ENCODE measurements at regions of chr1 and their contacts with region 1.

Region 1: GRCh38 chr1:158124999-158125398 is 55.7 kb upstream of the CD1D start:
- DNase-seq: peak; percentile 91
- ATAC-seq: peak; percentile 89
- H3K4me3 Mint-ChIP-seq: no peak overlapping the region
- H3K27ac Mint-ChIP-seq: no peak overlapping the region
- H3K4me1 Mint-ChIP-seq: peaks cover 39% of the 10 kb centered on the region
- H3K27me3 Mint-ChIP-seq: no peaks in the 10 kb centered on the region; the same call in none of the 2 replicates
- CTCF ChIP-seq: peak; percentile 78

Region 2: DNA sequence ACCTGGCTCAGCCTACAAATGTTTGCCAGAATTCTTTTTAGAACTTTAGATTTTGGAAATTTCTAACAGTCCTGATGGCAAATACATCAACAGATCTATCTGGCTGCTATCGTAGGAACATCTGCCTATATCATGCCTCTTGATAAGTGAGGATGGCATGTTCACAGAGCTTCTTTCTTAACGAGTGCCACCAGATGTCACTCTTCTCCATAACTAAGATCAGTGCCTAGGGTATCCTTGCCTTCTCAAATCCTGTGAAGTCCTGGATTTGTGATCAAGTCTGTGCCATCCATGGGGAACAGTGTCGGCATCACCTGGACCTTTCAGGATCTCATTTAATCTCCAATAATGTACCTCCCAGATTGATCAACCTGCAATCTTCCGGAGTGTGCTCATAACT is 246.9 kb before region 1 on chr1:
- CTCF ChIA-PET with region 1: interaction called, 12 read pairs
- POLR2A ChIA-PET with region 1: no interaction called
- DNase-seq: no peak
- ATAC-seq: peak; percentile 92
- H3K4me3 Mint-ChIP-seq: no peak overlapping the region
- H3K27ac Mint-ChIP-seq: no peak overlapping the region
- H3K4me1 Mint-ChIP-seq: no peaks in the 10 kb centered on the region
- H3K27me3 Mint-ChIP-seq: no peaks in the 10 kb centered on the region; the same call in 1 of the 2 replicates
- CTCF ChIP-seq: peak; percentile 28; the same call in 1 of the 2 replicates

Region 3: GRCh38 chr1:157963713-157964112 is 161.3 kb before region 1 on chr1:
- CTCF ChIA-PET with region 1: interaction called, 820 read pairs
- POLR2A ChIA-PET with region 1: interaction called, 3 read pairs
- DNase-seq: peak; percentile 79
- ATAC-seq: peak; percentile 90
- H3K4me3 Mint-ChIP-seq: no peak overlapping the region
- H3K27ac Mint-ChIP-seq: no peak overlapping the region
- H3K4me1 Mint-ChIP-seq: peaks cover 14% of the 10 kb centered on the region
- H3K27me3 Mint-ChIP-seq: peaks cover 3% of the 10 kb centered on the region; the same call in 1 of the 2 replicates
- CTCF ChIP-seq: peak; percentile 89

Region 4: GRCh38 chr1:157984469-157984868 is 140.5 kb before region 1 on chr1:
- CTCF ChIA-PET with region 1: interaction called, 475 read pairs
- POLR2A ChIA-PET with region 1: no interaction called
- DNase-seq: no peak
- ATAC-seq: no peak
- H3K4me3 Mint-ChIP-seq: no peak overlapping the region
- H3K27ac Mint-ChIP-seq: no peak overlapping the region
- H3K4me1 Mint-ChIP-seq: peaks cover 35% of the 10 kb centered on the region
- H3K27me3 Mint-ChIP-seq: peaks cover 6% of the 10 kb centered on the region; the same call in 1 of the 2 replicates
- CTCF ChIP-seq: no peak

Region 5: DNA sequence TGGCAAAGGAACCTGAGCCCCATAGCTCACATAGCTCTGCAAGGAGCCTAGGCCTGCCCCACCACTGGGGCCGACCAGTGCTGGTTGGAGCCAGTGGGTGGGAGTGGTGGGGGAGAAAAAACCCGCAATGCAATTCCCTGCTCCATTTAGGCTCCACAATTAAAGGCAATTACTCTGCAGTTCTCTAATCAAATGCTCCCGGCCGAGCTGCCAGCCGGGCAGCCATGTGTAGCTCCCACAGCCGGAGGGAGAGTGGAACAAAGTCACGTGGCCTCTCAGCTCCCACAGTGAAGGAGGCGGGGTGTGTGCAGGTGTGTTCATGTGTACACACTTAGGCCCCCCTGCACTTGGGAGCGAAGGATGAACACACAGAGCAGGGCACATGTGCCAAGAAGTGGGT is 49.9 kb before region 1 on chr1:
- CTCF ChIA-PET with region 1: interaction called, 35 read pairs
- POLR2A ChIA-PET with region 1: no interaction called
- DNase-seq: no peak
- ATAC-seq: no peak
- H3K4me3 Mint-ChIP-seq: no peak overlapping the region
- H3K27ac Mint-ChIP-seq: no peak overlapping the region
- H3K4me1 Mint-ChIP-seq: peaks cover 79% of the 10 kb centered on the region
- H3K27me3 Mint-ChIP-seq: no peaks in the 10 kb centered on the region
- CTCF ChIP-seq: no peak

Region 6: GRCh38 chr1:158095737-158096335 is 29.2 kb before region 1 on chr1:
- CTCF ChIA-PET with region 1: interaction called, 443 read pairs
- POLR2A ChIA-PET with region 1: interaction called, 3 read pairs
- DNase-seq: peak; percentile 70
- ATAC-seq: peak; percentile 84
- H3K4me3 Mint-ChIP-seq: no peak overlapping the region
- H3K27ac Mint-ChIP-seq: no peak overlapping the region
- H3K4me1 Mint-ChIP-seq: peaks cover 51% of the 10 kb centered on the region
- H3K27me3 Mint-ChIP-seq: no peaks in the 10 kb centered on the region
- CTCF ChIP-seq: peak; percentile 75

Region 7: DNA sequence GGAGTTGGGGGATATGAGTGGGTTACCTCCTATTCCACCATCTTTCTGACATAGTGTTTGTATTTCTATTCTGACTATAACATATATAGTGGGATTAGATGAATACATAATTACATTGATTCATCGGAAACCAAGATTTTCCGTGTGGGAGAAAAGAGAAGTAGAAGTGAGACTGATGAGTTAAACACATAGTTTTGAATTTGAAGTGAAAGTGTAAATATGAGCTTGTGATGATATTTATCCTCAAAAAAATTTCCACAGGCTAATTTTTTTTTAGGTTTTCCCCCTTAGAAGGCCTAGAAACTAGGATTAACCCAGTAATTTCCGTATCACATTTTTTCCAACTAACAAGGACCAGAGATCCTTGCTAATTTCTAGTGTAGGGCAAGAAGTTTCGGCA is 199.4 kb after region 1 on chr1:
- CTCF ChIA-PET with region 1: no interaction called
- POLR2A ChIA-PET with region 1: no interaction called
- DNase-seq: no peak
- ATAC-seq: no peak
- H3K4me3 Mint-ChIP-seq: no peak overlapping the region
- H3K27ac Mint-ChIP-seq: no peak overlapping the region
- H3K4me1 Mint-ChIP-seq: peaks cover 4% of the 10 kb centered on the region
- H3K27me3 Mint-ChIP-seq: no peaks in the 10 kb centered on the region; the same call in 1 of the 2 replicates
- CTCF ChIP-seq: no peak

Region 8: GRCh38 chr1:158398818-158399514 is 274.0 kb after region 1 on chr1 and contains the start of gene OR10T2:
- CTCF ChIA-PET with region 1: no interaction called
- POLR2A ChIA-PET with region 1: no interaction called
- DNase-seq: no peak
- ATAC-seq: no peak
- H3K4me3 Mint-ChIP-seq: no peak within 1 kb of the TSS
- H3K27ac Mint-ChIP-seq: no peak within 1 kb of the TSS
- H3K4me1 Mint-ChIP-seq: peaks cover 3% of the 10 kb centered on the region; the same call in 1 of the 2 replicates
- H3K27me3 Mint-ChIP-seq: no peaks in the 10 kb centered on the region; the same call in 1 of the 2 replicates
- CTCF ChIP-seq: no peak
- total RNA-seq, gene OR10T2: not detected in 3 replicates

Region 9: DNA sequence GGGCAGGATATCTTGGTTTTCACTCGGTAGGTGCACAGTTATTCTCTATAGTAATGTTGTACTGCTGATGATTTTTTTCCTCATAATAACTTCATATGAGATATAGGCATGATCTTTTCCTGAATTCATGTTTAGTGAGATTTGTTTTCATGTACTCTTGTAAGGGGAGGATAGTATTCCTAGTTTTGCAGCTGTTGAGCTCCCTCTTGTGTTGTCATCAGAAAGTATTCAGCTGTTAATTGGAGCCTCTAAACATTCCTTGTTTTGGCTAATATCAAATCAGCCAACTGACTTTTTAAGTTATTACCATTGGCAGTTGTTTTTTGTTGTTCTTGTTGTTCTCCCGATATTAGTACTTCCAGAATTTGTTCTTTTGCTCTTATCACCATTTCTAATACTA is 371.4 kb after region 1 on chr1:
- CTCF ChIA-PET with region 1: interaction called, 14 read pairs
- POLR2A ChIA-PET with region 1: no interaction called
- DNase-seq: no peak
- ATAC-seq: peak; percentile 85
- H3K4me3 Mint-ChIP-seq: no peak overlapping the region
- H3K27ac Mint-ChIP-seq: no peak overlapping the region
- H3K4me1 Mint-ChIP-seq: 0 out of 2 replicates have a peak, but pooled peaks cover 5% of the 10 kb centered on the region
- H3K27me3 Mint-ChIP-seq: no peaks in the 10 kb centered on the region
- CTCF ChIP-seq: 0 out of 2 replicates have a peak, but pooled peaks have one; percentile 17